ENCODE measurements at regions of chr13 and their contacts with region 1.

Region 1: DNA sequence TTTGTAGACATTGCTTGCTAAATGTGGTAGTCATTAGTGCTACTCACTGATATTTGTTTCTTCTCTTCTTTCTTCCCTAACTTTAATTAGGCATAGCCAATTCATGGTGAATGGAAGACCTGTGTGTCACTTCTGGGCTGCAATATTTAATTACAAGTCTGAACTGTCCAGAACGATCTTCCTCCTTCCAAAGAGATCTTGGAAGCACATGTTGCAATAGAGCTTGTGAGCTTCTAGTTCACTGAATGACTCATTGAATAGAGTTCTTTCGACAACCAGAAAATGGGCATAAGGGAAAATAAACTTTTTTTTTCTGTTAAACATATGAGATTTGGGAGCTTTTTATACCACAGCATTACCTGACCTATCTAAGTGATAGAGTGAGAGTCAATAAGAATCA is 1264.6 kb downstream of the PCDH9 start:
- DNase-seq: no peak
- ATAC-seq: no peak
- H3K4me3 Mint-ChIP-seq: no peak overlapping the region
- H3K27ac Mint-ChIP-seq: no peak overlapping the region
- H3K4me1 Mint-ChIP-seq: no peaks in the 10 kb centered on the region
- H3K27me3 Mint-ChIP-seq: no peaks in the 10 kb centered on the region
- CTCF ChIP-seq: no peak

Region 2: DNA sequence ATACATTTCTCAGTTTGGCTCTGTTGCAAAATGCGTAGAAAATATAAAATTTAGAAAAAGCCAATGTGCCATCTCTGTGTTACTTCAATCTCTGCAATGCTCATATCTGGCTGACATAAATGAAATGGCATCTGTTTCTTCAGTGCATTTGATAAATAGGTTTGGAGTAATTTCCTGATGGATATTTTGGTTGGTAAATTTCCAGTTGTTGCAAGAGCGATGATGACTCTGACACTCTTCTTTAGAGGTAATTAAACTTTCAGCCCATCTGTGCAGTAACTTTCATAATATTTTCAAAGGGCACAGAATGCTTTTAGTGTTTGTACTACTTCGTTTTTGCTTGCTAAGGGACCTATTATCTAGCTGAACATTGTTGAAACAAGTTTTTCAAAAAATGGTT is 21.8 kb before region 1 on chr13:
- CTCF ChIA-PET with region 1: no interaction called
- POLR2A ChIA-PET with region 1: no interaction called
- intact Hi-C with region 1: loop called (anchors 2 kb)
- DNase-seq: no peak
- ATAC-seq: no peak
- H3K4me3 Mint-ChIP-seq: no peak overlapping the region
- H3K27ac Mint-ChIP-seq: no peak overlapping the region
- H3K4me1 Mint-ChIP-seq: no peaks in the 10 kb centered on the region
- H3K27me3 Mint-ChIP-seq: no peaks in the 10 kb centered on the region
- CTCF ChIP-seq: no peak